PC-3 (cell line): ENCODE measurements at regions of chr4 and their contacts with region 1.

Region 1: DNA sequence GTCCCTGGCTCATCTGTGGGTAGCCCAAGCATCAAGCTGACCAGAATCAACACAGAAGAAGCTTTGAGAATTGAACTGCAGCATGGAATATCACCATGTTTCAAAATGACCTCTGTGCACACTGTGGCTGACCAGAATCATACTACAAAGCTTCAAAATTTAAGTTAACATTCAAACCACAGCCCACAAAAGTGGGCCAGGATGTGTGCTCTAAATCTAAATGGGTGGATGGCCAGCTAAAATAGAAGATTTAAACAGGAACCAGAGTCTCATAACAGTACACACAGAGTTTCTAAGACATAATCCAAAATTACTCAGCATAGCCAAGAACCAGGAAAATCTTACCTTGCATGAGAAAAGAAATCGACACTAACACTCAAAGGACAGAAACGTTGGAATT is 46.1 kb downstream of the KLF3 start:
- DNase-seq: no peak
- ATAC-seq: no peak
- H3K4me3 ChIP-seq: no peak overlapping the region
- H3K27ac ChIP-seq: no peak overlapping the region
- H3K4me1 ChIP-seq: no peaks in the 10 kb centered on the region
- H3K27me3 ChIP-seq: no peaks in the 10 kb centered on the region
- CTCF ChIP-seq: no peak

Region 2: DNA sequence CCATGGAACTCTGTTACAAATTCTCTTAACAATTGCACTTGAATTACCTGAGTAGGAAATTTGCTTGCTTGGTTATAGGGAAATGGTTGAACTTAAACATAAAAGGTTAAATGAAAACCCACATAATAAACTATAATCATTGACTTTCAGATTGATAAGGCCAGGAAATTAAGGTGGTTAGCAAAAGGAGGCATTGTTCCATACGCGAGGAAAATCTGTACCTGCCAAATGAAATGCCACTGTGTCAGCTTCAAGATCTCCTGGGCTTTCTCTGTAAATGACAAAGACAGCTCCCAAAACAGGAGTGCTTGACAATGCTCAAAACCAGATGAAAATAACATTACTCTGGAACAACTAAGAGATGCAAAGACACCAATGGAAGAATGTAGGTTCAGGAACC is 171.5 kb before region 1 on chr4:
- CTCF ChIA-PET with region 1: no interaction called
- POLR2A ChIA-PET with region 1: interaction called, 24 read pairs
- intact Hi-C with region 1: no loop called
- DNase-seq: no peak
- ATAC-seq: no peak
- H3K4me3 ChIP-seq: no peak overlapping the region
- H3K27ac ChIP-seq: no peak overlapping the region
- H3K4me1 ChIP-seq: no peaks in the 10 kb centered on the region
- H3K27me3 ChIP-seq: no peaks in the 10 kb centered on the region
- CTCF ChIP-seq: no peak